Common myeloid progenitor, CD34-positive (primary cell): ENCODE measurements at regions of chr12 and their contacts with region 1.

Region 1: GRCh38 chr12:27383429-27384260 is 51.0 kb downstream of the BMAL2 start:
- DNase-seq: peak; percentile 73 to 82 (median 77)
- H3K4me3 ChIP-seq: no peak overlapping the region
- H3K27ac ChIP-seq: no peak overlapping the region
- H3K4me1 ChIP-seq: peaks cover 0 to 7% (median 0%) of the 10 kb centered on the region in 4 experiments
- H3K27me3 ChIP-seq: no peaks in the 10 kb centered on the region

Region 2: DNA sequence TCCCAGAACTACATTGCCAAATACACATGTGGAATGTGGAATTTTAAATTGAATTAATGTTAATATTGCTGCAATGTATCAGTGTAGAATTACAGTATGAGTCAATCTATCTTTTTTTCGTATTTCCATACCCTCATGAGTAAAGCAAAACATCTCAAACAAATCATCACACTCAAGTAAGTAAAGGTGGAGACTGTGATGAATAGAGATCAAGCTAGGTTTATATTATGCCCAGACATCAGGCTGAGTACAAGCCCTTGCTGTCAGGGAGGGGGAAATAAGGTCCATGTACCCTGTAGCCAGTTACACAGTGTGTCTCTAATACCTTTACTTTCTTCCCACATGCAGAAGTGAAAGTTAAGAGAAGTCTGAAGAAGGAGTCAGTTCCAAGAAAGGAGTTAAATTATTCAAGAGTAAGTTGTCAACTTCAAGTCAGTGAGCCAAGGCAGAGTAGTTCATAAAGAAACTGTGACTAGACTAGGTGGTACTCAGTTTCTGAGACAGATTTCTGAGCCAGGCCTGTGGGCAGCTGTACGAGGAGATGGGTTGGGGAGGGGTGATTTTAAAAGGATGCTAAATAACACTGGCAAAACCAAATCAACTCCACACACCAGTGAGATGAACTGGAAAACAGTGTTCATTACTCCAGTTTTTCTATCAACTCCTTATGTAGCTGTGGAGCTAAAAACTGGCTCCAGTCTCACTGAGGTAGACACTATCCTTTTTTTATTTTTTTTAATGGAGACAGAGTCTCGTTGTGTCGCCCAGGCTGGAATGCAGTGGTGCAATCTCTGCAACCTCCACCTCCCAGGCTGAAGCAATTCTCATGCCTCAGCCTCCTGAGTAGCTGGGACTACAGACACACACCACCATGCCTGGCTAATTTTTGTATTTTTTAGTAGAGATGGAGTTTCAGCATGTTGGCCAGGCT is 163.3 kb before region 1 on chr12:
- CTCF ChIA-PET with region 1: no interaction called
- POLR2A ChIA-PET with region 1: no interaction called
- DNase-seq: no peak
- H3K4me3 ChIP-seq: no peak overlapping the region
- H3K27ac ChIP-seq: no peak overlapping the region
- H3K4me1 ChIP-seq: peaks cover 0 to 15% (median 1%) of the 10 kb centered on the region in 4 experiments
- H3K27me3 ChIP-seq: no peaks in the 10 kb centered on the region

Region 3: GRCh38 chr12:27367078-27367477 is 16.6 kb before region 1 on chr12:
- CTCF ChIA-PET with region 1: interaction called, 13 read pairs
- POLR2A ChIA-PET with region 1: no interaction called
- DNase-seq: peak in 1 of 3 donors; percentile 24
- H3K4me3 ChIP-seq: no peak overlapping the region
- H3K27ac ChIP-seq: no peak overlapping the region
- H3K4me1 ChIP-seq: peaks cover 0 to 2% (median 0%) of the 10 kb centered on the region in 4 experiments
- H3K27me3 ChIP-seq: no peaks in the 10 kb centered on the region